Activated naive CD4-positive, alpha-beta T cell treated with anti-CD3 and anti-CD28 coated beads for 36 hours (primary cell): ENCODE measurements at regions of chr3 and their contacts with region 1.

Region 1: DNA sequence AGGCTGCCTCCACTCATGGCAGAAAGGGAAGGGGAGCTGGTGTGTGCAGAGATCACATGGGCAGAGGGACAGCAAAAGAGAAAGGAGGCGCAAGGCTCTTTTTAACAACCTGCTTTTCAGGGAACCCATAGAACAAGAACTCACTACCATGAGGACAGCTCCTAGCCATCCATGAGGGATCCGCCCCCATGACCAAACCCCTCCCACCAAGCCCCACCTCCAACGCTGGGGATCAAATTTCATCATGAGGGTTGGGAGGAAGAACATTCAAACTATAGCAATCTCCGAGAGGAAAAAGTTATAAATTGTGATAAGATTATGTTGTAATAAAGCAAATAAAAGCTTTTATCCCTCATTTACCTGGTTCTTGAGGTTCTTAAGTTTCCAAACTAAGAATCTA is 84.7 kb upstream of the LMCD1 start:
- DNase-seq: peak; percentile 9
- H3K4me3 Mint-ChIP-seq: no peak overlapping the region
- H3K27ac Mint-ChIP-seq: no peak overlapping the region
- H3K4me1 Mint-ChIP-seq: peaks cover 4% of the 10 kb centered on the region
- H3K27me3 Mint-ChIP-seq: no peaks in the 10 kb centered on the region

Region 2: GRCh38 chr3:8239718-8240695 is 177.0 kb before region 1 on chr3:
- CTCF ChIA-PET with region 1: interaction called, 12 read pairs
- intact Hi-C with region 1: loop called (anchors 10 kb)
- DNase-seq: peak; percentile 41
- H3K4me3 Mint-ChIP-seq: no peak overlapping the region
- H3K27ac Mint-ChIP-seq: no peak overlapping the region
- H3K4me1 Mint-ChIP-seq: no peaks in the 10 kb centered on the region
- H3K27me3 Mint-ChIP-seq: no peaks in the 10 kb centered on the region

Region 3: GRCh38 chr3:8324740-8325139 is 92.2 kb before region 1 on chr3:
- CTCF ChIA-PET with region 1: interaction called, 31 read pairs
- intact Hi-C with region 1: loop called (anchors 1 kb)
- DNase-seq: peak; percentile 48
- H3K4me3 Mint-ChIP-seq: no peak overlapping the region
- H3K27ac Mint-ChIP-seq: no peak overlapping the region
- H3K4me1 Mint-ChIP-seq: peaks cover 17% of the 10 kb centered on the region
- H3K27me3 Mint-ChIP-seq: no peaks in the 10 kb centered on the region

Region 4: DNA sequence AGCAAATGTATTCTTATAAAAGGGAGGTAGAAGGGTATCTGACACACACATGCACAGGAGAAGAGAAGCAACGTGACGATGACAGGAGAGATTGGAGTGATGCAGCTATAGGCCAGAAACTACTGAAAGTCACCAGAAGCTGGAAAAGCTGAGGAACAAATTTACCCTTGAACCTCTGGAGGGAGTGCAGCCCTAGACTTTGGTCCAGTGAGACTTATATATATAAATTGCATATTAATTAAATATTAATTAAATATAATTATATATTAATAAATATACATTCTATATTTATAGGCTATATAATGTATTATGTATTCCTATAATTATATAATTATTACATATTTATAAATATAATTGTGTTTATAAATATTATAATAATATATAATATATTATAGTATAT is 11.8 kb before region 1 on chr3:
- CTCF ChIA-PET with region 1: interaction called, 14 read pairs
- intact Hi-C with region 1: no loop called
- DNase-seq: no peak
- H3K4me3 Mint-ChIP-seq: no peak overlapping the region
- H3K27ac Mint-ChIP-seq: no peak overlapping the region
- H3K4me1 Mint-ChIP-seq: no peaks in the 10 kb centered on the region
- H3K27me3 Mint-ChIP-seq: no peaks in the 10 kb centered on the region

Region 5: DNA sequence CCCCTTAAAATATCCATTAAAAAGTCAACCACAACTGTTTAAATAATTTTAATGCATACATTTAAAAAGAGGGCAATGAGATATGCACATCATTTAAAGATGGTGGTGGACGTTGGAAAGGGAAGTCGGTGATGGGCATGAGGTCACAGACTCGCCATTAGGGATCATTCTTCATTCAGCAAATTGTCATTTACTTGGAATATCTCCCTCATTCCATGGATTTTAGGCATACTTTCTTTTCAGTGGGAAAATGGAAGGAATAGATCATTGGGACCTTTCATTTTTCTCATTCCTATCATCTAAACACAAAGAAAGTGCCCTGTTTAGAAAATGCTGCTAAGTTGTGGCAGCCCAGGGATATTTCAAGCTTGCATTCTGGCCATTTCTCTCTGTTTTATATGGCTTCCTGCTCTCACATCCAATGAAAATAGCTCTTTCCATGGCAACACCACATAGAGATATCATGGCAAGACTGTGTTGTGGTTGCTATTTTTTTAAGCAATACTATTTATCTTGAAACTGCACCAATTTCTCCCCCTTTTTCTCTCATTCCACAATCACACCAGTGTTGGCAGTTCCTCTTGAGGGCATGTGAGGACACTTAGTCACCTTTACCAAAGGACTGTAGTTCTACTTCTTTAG is 44.0 kb after region 1 on chr3:
- CTCF ChIA-PET with region 1: no interaction called
- intact Hi-C with region 1: no loop called
- DNase-seq: no peak
- H3K4me3 Mint-ChIP-seq: no peak overlapping the region
- H3K27ac Mint-ChIP-seq: no peak overlapping the region
- H3K4me1 Mint-ChIP-seq: no peaks in the 10 kb centered on the region
- H3K27me3 Mint-ChIP-seq: peaks cover 7% of the 10 kb centered on the region